Uterus (tissue), 4 donors: ENCODE measurements at regions of chr1 and their contacts with region 1.

Region 1: DNA sequence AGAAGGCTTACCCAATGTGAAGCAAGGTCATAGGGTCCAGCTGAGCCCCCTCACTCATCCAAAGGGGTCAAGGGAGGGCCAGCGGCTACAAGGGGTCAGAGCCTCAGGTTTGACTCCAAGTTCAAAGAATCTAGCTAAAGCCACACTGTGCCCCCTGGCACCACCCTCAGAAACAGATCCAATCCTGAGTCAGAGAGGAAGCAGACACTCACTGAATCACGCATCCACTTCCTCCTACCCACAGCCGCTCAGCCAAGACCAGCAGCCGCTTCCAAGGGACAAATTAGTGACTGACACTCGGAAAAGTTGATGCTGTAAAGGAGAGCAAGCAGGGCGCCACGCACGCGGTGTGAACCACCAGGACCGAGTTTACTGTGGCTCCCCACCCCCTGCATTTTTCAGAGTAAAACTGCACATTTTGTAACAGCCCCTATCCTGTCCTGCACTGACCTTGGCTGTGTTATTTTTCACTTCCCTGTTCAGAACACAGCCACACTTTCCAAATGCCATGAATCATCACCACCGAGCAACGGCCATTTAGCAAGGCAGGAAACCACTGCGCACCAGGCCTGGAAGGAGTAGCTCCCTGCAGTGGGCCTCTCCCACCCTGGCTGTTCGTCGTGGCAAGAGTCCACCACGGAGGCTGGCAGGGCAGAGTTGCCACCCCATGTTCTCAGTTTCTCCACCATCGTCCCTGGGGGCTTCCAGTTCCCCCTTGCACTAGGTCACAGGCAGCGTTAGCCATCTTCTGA is 147.8 kb downstream of the TOMM20 start:
- DNase-seq: peak; percentile 83 to 92
- H3K4me3 ChIP-seq: no peak overlapping the region
- H3K27ac ChIP-seq: peak overlapping the region; percentile 92 to 93
- H3K4me1 ChIP-seq: peaks cover 18 to 33% of the 10 kb centered on the region in 2 donors
- H3K27me3 ChIP-seq: no peaks in the 10 kb centered on the region
- CTCF ChIP-seq: no peak
- POLR2A ChIP-seq: peak in 1 of 2 donors; percentile 7

Region 2: GRCh38 chr1:234722904-234723720 is 257.7 kb before region 1 on chr1:
- intact Hi-C with region 1: loop called (anchors 10 kb)
- DNase-seq: peak; percentile 78 to 89
- H3K4me3 ChIP-seq: no peak overlapping the region
- H3K27ac ChIP-seq: peak overlapping the region; percentile 96 to 98
- H3K4me1 ChIP-seq: peaks cover 25 to 59% of the 10 kb centered on the region in 2 donors
- H3K27me3 ChIP-seq: no peaks in the 10 kb centered on the region
- CTCF ChIP-seq: peak in 1 of 4 experiments; percentile 5
- POLR2A ChIP-seq: no peak

Region 3: DNA sequence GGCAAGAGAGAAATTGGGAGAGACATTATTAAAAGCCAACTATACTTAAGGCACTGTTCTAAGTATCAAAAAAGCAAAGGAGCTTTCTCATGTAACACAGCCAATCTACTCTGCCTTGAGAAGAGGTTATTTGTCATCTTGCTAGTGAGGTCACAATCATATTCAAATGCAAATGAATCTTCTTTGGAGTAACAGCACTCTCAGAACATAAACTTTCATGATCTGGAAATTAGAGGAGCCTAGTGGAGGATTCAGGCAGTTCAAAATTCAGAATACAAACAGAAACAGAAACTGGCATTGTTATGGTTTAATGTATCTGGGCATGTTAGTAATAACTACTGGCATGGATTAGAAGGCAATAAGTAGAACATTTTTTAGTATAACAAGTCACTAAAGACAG is 289.8 kb after region 1 on chr1:
- intact Hi-C with region 1: no loop called
- DNase-seq: no peak
- H3K4me3 ChIP-seq: no peak overlapping the region
- H3K27ac ChIP-seq: no peak overlapping the region
- H3K4me1 ChIP-seq: no peaks in the 10 kb centered on the region
- H3K27me3 ChIP-seq: no peaks in the 10 kb centered on the region
- CTCF ChIP-seq: no peak
- POLR2A ChIP-seq: no peak